ENCODE measurements at regions of chr15 and their contacts with region 1.

Region 1: DNA sequence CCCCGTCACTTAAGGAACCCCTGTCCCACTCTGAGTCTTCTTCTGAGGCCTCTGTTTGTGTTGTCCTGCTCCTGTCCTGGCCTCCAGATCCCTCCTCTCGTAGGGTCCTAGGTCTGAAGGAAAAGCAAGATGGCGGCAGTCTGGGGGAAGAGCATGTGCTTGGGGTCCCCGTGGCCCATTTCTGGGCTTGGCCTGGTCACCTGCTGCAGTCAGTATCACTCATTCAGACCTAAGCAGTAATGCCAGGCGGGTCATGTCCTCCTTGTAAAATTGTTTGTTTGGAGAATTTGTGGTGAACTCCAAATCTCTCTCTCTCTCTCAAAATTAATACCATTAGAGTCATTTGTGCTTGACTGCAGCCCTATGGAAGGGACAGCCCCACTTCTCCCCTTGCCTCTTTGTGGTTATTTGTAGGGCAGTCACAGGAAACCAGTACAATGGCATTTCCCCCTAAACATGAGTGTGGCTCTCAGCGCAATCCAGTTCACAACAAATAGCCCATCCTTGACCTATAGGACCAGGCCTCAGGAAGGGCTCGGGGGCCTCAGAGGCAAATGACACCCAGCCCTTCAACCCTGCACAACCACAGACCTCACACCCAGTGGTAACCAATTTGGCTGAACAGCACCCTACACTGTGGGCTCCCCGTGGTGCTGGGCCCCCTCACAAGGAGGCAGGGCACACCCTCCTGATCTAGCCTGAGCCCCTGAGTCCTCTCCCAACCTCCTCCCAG is 173.5 kb downstream of the OR4M2 start:
- DNase-seq: no peak
- ATAC-seq: no peak
- H3K4me3 ChIP-seq: no peak overlapping the region
- H3K27ac ChIP-seq: no peak overlapping the region
- H3K4me1 ChIP-seq: peaks cover 0 to 14% (median 0%) of the 10 kb centered on the region in 12 donors
- H3K27me3 ChIP-seq: peaks cover 0 to 35% (median 0%) of the 10 kb centered on the region in 9 donors
- CTCF ChIP-seq: no peak
- POLR2A ChIP-seq: no peak

Region 2: DNA sequence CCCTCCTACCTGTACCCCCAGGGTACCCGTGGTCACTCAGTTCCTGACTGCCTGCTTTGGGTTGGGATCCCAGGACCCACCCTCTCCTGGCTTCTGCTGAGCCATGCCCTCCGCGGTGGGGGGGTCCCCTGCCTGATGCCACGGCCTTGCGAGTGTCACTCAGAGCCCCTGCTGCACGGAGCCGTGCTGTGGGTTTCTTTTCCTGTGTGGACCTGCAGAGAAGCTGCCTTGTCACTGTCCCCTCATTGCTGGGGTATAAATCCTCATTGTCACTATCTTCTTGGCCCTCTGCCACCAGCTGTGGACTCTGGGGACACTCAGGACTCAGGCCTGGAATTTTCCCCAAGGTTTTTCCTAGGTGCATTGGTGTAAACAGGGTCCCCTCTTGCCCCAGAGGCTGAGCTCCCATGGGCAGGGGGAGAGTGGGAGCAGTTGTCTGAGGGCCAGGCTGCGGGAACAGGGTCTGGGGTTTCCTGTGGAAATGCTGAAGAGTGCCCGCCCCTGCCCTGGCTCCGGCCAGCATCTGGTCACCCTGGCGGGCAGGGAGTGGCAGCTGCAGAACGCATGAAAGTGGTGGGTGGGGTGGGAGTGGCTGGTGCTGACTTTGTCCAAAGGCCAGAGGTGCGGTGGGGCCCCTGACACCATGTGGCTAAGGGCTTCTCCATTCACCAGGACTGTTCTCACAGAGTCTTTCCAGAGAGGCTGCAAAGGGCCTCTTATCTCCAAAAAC is 1903.9 kb before region 1 on chr15:
- intact Hi-C with region 1: loop called in 2 of 10 experiments (anchors 5 kb)
- DNase-seq: peak in 2 of 5 donors; percentile 20 to 72
- ATAC-seq: peak in 1 of 4 donors; percentile 2
- H3K4me3 ChIP-seq: no peak overlapping the region
- H3K27ac ChIP-seq: no peak overlapping the region
- H3K4me1 ChIP-seq: no peaks in the 10 kb centered on the region
- H3K27me3 ChIP-seq: peaks cover 0 to 66% (median 5%) of the 10 kb centered on the region in 9 donors
- CTCF ChIP-seq: no peak
- POLR2A ChIP-seq: no peak

Region 3: GRCh38 chr15:22229971-22230815 is 23.6 kb before region 1 on chr15:
- intact Hi-C with region 1: loop called in 1 of 10 experiments (anchors 2 kb)
- DNase-seq: no peak
- ATAC-seq: no peak
- H3K4me3 ChIP-seq: no peak overlapping the region
- H3K27ac ChIP-seq: no peak overlapping the region
- H3K4me1 ChIP-seq: peaks cover 0 to 5% (median 0%) of the 10 kb centered on the region in 12 donors
- H3K27me3 ChIP-seq: peaks cover 0 to 21% (median 0%) of the 10 kb centered on the region in 9 donors
- CTCF ChIP-seq: no peak
- POLR2A ChIP-seq: no peak

Region 4: GRCh38 chr15:22811640-22812039 is 557.8 kb after region 1 on chr15:
- intact Hi-C with region 1: no loop called
- DNase-seq: no peak
- ATAC-seq: peak in 2 of 4 donors; percentile 39 to 63
- H3K4me3 ChIP-seq: no peak overlapping the region
- H3K27ac ChIP-seq: no peak overlapping the region
- H3K4me1 ChIP-seq: peaks cover 0 to 6% (median 0%) of the 10 kb centered on the region in 12 donors
- H3K27me3 ChIP-seq: no peaks in the 10 kb centered on the region
- CTCF ChIP-seq: peak in 10 of 12 donors; percentile 8 to 41 (median 26)
- POLR2A ChIP-seq: no peak

Region 5: DNA sequence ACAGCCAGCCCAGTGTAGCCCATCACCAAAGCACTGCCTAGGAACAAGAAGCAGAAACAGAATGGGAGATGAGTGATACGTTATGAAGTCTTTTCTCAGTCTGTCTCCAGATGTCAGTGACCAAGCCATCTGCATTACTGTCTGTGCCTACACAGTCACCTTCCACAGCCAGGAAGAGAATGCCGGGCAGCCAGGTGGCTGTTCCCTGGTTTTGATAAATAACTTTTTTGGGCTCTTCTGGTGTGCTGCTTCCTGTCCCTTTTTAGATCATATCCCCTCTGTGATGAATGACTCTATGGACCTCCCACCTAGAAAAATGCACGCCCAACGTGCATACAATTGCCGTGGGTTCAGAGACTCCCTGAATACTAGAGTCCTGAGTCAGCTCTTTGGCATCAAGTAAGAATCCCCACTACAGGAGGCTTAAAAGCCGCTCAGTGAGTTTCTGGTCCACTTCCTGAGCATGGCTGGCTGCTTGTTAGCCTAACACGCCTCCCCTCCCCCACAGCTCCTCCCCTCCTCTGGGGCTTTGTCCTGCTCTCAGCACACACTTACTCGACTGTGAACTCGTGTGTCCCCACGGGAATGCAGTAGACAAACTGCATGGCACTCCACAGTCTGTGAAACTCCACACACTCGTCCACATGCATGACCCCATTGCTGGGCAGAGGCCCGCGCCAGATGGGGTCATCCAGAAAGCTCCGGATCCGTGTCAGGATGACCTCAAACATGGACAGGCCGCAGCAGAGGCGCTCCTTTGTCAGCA is 619.3 kb after region 1 on chr15:
- intact Hi-C with region 1: no loop called
- DNase-seq: no peak
- ATAC-seq: peak in 1 of 4 donors; percentile 25
- H3K4me3 ChIP-seq: no peak overlapping the region
- H3K27ac ChIP-seq: peak overlapping the region in 5 of 12 donors; percentile 8 to 57 (median 47)
- H3K4me1 ChIP-seq: peaks cover 0 to 10% (median 0%) of the 10 kb centered on the region in 12 donors
- H3K27me3 ChIP-seq: no peaks in the 10 kb centered on the region
- CTCF ChIP-seq: no peak
- POLR2A ChIP-seq: no peak

Measured in heart left ventricle (tissue), 16 donors.